ENCODE measurements at regions of chr1 and their contacts with region 1.

Region 1: DNA sequence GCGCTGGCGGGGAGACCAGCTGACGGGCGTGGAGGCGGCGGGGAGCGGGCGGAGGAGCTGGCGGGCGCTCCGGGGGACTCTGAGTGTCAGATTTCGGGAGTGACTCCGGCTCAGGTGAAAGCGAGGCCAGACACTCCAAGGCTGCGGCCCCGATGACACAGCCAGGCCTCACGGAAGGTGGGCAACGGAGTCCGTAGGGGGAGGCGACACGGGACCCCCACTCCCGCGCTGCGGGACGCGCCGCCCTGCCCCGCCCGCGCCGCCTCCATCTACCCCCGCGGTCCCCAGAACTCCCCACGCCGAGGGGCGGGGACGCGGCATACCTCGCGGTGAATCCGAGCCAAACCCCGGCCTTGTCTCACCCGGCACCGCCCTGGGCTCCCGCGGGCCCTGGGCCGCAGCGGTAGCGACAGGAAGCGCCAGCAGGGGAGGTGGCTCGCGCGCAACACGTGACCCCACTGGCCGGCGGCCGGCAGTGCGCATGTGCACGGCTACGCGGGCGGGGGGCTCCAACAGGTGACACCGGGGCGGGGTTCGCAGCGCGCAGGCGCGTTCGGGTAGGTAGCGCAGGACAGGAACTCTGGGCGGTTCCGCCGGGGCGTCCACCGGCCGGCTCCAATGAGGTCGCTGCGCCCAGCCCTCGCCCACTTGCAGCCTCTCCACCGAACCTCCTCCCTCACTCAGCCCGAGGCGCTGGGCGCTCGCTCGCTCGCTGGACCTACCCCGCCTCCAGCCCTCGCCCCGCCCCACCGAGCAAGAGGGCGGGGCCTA is at the start of gene CC2D1B:
- DNase-seq: peak; percentile 97 to 99
- ATAC-seq: peak; percentile 95 to 98 (median 97)
- H3K4me3 ChIP-seq: peak within 1 kb of the TSS; percentile 48 to 98 (median 85)
- H3K27ac ChIP-seq: peak within 1 kb of the TSS; percentile 46 to 99 (median 90)
- H3K4me1 ChIP-seq: peaks cover 0 to 26% (median 12%) of the 10 kb centered on the region in 9 donors
- H3K27me3 ChIP-seq: peaks cover 0 to 10% (median 0%) of the 10 kb centered on the region in 7 donors
- CTCF ChIP-seq: peak in 5 of 9 donors; percentile 22 to 48 (median 29)
- total RNA-seq, gene CC2D1B: 14.4 to 19.9 (median 17.2) TPM

Region 2: DNA sequence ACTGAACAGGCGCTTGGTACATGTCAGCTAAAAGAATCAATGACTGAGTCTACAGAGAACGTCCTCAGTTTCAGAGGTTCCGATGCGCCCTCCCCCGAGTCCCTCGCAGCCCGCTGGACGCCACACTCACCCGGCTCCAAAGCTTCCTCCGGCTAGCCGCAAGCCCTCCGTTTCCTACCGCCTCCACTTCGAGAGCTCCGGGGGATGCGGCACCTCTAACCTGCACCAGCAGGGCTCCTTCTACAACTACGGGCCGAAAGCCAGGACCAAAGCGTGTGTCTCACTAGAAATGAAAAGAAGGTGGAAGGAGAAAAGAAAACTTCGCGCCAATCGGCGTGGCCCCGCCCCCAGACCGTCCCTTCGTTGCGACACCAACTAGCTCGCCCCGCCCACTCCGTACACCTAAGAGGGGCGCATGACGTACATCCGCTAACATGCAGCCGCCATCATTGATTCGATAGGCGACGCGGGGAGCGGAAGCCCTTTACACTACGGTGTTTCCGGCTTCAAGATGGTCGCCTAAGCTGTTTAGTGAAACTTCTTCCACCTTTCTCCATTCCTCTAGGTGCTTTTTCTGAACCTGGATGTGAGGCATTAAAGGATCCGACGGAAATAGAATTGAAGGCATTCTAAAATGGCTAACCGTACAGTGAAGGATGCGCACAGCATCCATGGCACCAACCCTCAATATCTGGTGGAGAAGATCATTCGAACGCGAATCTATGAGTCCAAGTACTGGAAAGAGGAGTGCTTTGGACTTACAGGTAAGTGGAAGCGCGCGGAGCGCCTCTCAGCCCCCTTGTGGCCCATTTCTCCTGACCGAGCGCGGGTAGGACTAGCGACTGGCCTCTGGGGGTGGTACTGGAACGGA is 38.4 kb after region 1 on chr1 and contains the starts of genes ORC1 and PRPF38A:
- intact Hi-C with region 1: loop called in 3 of 10 experiments (anchors 1 to 2 kb)
- DNase-seq: peak; percentile 95 to 98
- ATAC-seq: peak; percentile 99 to 100 (median 100)
- H3K4me3 ChIP-seq: peak within 1 kb of the TSS; percentile 64 to 95 (median 86)
- H3K27ac ChIP-seq: peak within 1 kb of the TSS; percentile 5 to 93 (median 88)
- H3K4me1 ChIP-seq: peaks cover 7 to 34% (median 21%) of the 10 kb centered on the region in 9 donors
- H3K27me3 ChIP-seq: no peaks in the 10 kb centered on the region
- CTCF ChIP-seq: peak in 7 of 9 donors; percentile 19 to 62 (median 52)
- total RNA-seq, gene ORC1: 0.08 to 0.90 (median 0.20) TPM in 8 of 10 donors, not detected in the others
- total RNA-seq, gene PRPF38A: 16.7 to 20.8 (median 18.8) TPM

Region 3: GRCh38 chr1:52424231-52424636 is 58.3 kb after region 1 on chr1:
- intact Hi-C with region 1: no loop called
- DNase-seq: no peak
- ATAC-seq: peak in 6 of 8 donors; percentile 24 to 44 (median 34)
- H3K4me3 ChIP-seq: no peak overlapping the region
- H3K27ac ChIP-seq: peak overlapping the region in 4 of 10 donors; percentile 21 to 63 (median 42)
- H3K4me1 ChIP-seq: peaks cover 0 to 24% (median 10%) of the 10 kb centered on the region in 9 donors
- H3K27me3 ChIP-seq: no peaks in the 10 kb centered on the region
- CTCF ChIP-seq: no peak